Psoas muscle (tissue), 8 donors: ENCODE measurements at regions of chr9 and their contacts with region 1.

Region 1: DNA sequence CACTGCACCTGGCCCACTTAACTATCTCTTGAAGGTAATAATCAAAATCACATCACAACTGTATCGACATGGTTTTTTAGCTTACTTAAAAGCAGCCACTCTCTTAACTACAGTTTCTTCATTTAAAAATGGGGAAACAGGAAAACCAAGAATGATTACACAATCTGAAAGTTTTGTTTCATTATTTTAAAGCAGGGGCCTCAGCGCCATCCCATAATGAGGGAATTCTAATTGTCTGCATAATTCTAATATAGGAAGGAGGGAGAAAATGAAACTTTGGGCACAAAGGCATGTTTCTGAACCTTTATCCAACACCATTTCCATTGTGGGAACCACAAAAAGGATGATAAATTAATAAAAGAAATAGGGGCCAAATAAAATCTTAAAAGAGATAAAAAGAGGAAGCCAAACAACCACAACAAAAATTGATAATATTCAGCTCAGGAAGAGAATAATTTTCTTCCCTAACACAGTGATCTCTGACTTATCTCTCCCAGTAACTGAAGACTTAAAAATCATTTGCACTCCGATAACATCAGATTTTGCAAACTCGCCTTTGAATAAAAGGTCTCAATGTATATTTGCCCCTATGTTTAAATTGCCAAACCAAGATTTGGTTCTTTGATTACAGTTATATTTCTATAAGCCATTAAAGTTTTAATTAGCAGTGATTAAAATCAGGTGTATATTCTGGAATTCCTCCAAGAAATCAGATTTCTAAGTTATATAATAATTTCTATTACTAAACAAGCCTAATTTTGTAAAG is 7.4 kb downstream of the HACD4 start:
- DNase-seq: no peak
- ATAC-seq: no peak
- H3K4me3 ChIP-seq: no peak overlapping the region
- H3K27ac ChIP-seq: no peak overlapping the region
- H3K4me1 ChIP-seq: no peaks in the 10 kb centered on the region
- H3K27me3 ChIP-seq: no peaks in the 10 kb centered on the region
- CTCF ChIP-seq: no peak

Region 2: GRCh38 chr9:20621471-20622329 is 402.3 kb before region 1 on chr9:
- intact Hi-C with region 1: no loop called
- DNase-seq: peak; percentile 75 to 89
- ATAC-seq: peak; percentile 58 to 68 (median 66)
- H3K4me3 ChIP-seq: peak overlapping the region; percentile 71
- H3K27ac ChIP-seq: peak overlapping the region; percentile 81
- H3K4me1 ChIP-seq: peaks cover 21% of the 10 kb centered on the region
- H3K27me3 ChIP-seq: no peaks in the 10 kb centered on the region
- CTCF ChIP-seq: no peak

Region 3: GRCh38 chr9:21001581-21001980 is 22.5 kb before region 1 on chr9:
- intact Hi-C with region 1: loop called in 1 of 2 experiments (anchors 2 kb)
- DNase-seq: no peak
- ATAC-seq: no peak
- H3K4me3 ChIP-seq: no peak overlapping the region
- H3K27ac ChIP-seq: no peak overlapping the region
- H3K4me1 ChIP-seq: no peaks in the 10 kb centered on the region
- H3K27me3 ChIP-seq: no peaks in the 10 kb centered on the region
- CTCF ChIP-seq: no peak

Region 4: GRCh38 chr9:21070171-21070571 is 46.1 kb after region 1 on chr9:
- intact Hi-C with region 1: no loop called
- DNase-seq: peak in 1 of 2 donors; percentile 19
- ATAC-seq: peak; percentile 53 to 82 (median 67)
- H3K4me3 ChIP-seq: peak overlapping the region; percentile 26
- H3K27ac ChIP-seq: no peak overlapping the region
- H3K4me1 ChIP-seq: peaks cover 14% of the 10 kb centered on the region
- H3K27me3 ChIP-seq: no peaks in the 10 kb centered on the region
- CTCF ChIP-seq: peak; percentile 18

Region 5: GRCh38 chr9:22308177-22308576 is 1284.1 kb after region 1 on chr9:
- intact Hi-C with region 1: no loop called
- DNase-seq: no peak
- ATAC-seq: no peak
- H3K4me3 ChIP-seq: no peak overlapping the region
- H3K27ac ChIP-seq: no peak overlapping the region
- H3K4me1 ChIP-seq: no peaks in the 10 kb centered on the region
- H3K27me3 ChIP-seq: no peaks in the 10 kb centered on the region
- CTCF ChIP-seq: no peak